GM12878 (cell line): ENCODE measurements at regions of chr5 and their contacts with region 1.

Region 1: GRCh38 chr5:76256116-76256889 is 146.8 kb upstream of the IQGAP2 start:
- DNase-seq: no peak
- ATAC-seq: peak; percentile 98
- H3K4me3 ChIP-seq: no peak overlapping the region
- H3K27ac ChIP-seq: no peak overlapping the region
- H3K4me1 ChIP-seq: peaks cover 3% of the 10 kb centered on the region; the same call in 1 of the 2 replicates
- H3K27me3 ChIP-seq: no peaks in the 10 kb centered on the region
- CTCF ChIP-seq: peak; percentile 83 to 93 (median 85)
- EP300 ChIP-seq: no peak
- POLR2A ChIP-seq: no peak
- RAD21 ChIP-seq: peak; percentile 99

Region 2: DNA sequence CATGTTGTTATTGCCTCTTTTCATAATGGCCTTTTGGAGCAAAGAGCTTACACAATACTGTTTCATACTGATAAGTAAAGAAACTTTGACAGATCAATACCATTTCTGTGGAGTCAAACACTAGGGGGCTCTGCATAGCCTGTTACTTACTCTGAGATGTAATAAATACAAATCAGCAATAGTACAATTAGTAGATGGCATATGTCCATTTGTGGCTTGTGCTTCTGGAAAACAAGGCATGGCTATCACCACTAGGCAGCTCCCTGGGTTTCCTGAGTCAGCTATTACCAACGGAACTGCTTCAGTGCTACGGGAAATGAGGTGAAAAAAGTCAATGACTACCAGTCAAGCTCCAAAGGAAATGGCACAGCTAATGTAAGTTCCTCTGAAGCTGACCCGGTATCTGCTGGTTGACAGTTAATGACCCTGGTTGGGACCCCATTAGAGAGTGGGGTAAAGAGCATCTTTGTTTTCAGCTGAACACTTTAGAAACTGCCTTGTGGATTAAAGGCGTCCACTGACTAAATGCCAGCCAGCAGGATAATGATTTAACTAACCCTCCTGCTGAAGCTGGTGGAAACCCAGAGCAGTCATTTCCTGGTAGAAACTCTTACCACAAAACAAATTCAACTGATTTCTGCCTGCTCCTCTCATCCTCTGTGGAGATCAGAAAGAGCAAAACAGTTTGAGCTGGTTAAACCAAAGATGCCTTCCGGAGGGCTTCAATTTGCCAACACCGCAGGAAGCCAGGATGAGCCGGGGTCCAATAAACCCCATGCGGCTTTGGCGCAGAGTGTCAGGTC is 1321.2 kb before region 1 on chr5:
- CTCF ChIA-PET with region 1: no interaction called
- POLR2A ChIA-PET with region 1: no interaction called
- RAD21 ChIA-PET with region 1: no interaction called
- SMC1A ChIA-PET with region 1: no interaction called
- in situ Hi-C with region 1: no loop called
- intact Hi-C with region 1: loop called (anchors 10 kb)
- DNase-seq: no peak
- ATAC-seq: peak; percentile 64
- H3K4me3 ChIP-seq: no peak overlapping the region
- H3K27ac ChIP-seq: no peak overlapping the region
- H3K4me1 ChIP-seq: no peaks in the 10 kb centered on the region
- H3K27me3 ChIP-seq: peaks cover 0 to 6% of the 10 kb centered on the region in 2 experiments; a peak in 2 of 4 replicates
- CTCF ChIP-seq: peak; percentile 31 to 40 (median 36); a peak in 4 of 6 replicates
- EP300 ChIP-seq: no peak
- POLR2A ChIP-seq: no peak
- RAD21 ChIP-seq: 0 out of 2 replicates have a peak, but pooled peaks have one; percentile 11

Region 3: DNA sequence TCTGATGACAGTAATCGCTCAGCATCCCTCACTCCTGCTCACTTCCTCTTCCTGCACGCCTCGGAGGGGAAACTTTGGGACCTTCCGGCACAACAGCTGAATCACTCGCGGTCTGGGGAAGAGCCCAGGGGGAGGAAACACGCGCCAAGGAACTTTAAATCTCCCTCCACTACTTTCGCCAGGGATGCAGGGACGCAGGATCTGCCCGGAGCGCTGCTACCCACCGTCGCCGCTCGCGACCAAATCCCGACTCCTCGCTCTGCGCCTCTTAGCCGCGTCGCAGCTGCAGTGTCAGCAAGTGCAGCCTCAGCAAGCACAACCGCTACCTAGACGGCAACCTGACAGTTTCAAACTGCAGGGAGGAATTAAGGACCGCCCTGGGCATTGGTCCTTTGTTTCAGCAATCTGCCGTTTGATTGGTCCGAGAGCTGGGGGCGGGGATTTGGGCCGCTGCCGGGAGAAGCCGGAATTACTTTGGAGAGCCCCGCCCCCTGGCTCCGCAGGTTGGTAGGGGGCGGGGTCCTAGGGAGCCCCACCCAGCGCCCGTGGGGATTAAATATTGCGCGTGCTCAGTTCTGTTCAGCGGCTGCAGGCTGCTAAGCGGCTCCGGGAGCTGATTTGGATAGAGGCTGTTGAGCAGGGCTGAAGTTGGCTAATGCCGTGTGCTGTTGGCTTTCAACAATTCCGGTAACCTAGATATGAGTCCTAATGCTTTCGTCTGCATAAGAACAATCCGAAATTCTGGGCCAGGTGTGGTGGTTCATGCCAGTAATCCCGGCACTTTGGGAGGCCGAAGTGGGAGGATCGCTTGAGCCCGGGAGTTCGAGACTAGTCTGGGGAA is 539.0 kb before region 1 on chr5 and contains the start of gene POC5:
- CTCF ChIA-PET with region 1: interaction called, 4 read pairs
- POLR2A ChIA-PET with region 1: no interaction called
- RAD21 ChIA-PET with region 1: no interaction called
- SMC1A ChIA-PET with region 1: no interaction called
- in situ Hi-C with region 1: no loop called
- intact Hi-C with region 1: loop called (anchors 5 kb)
- DNase-seq: peak; percentile 91
- ATAC-seq: peak; percentile 95
- H3K4me3 ChIP-seq: peak within 1 kb of the TSS; percentile 96
- H3K27ac ChIP-seq: peak within 1 kb of the TSS; percentile 98
- H3K4me1 ChIP-seq: no peaks in the 10 kb centered on the region
- H3K27me3 ChIP-seq: no peaks in the 10 kb centered on the region
- CTCF ChIP-seq: no peak
- EP300 ChIP-seq: no peak
- POLR2A ChIP-seq: peak; percentile 100
- RAD21 ChIP-seq: no peak
- polyA plus RNA-seq, gene POC5: 16.6 to 24.7 TPM

Region 4: GRCh38 chr5:75856056-75856455 is 400.2 kb before region 1 on chr5:
- CTCF ChIA-PET with region 1: no interaction called
- POLR2A ChIA-PET with region 1: no interaction called
- RAD21 ChIA-PET with region 1: no interaction called
- SMC1A ChIA-PET with region 1: no interaction called
- in situ Hi-C with region 1: no loop called
- intact Hi-C with region 1: no loop called
- DNase-seq: no peak
- ATAC-seq: no peak
- H3K4me3 ChIP-seq: no peak overlapping the region
- H3K27ac ChIP-seq: no peak overlapping the region
- H3K4me1 ChIP-seq: no peaks in the 10 kb centered on the region
- H3K27me3 ChIP-seq: no peaks in the 10 kb centered on the region
- CTCF ChIP-seq: no peak
- EP300 ChIP-seq: no peak
- POLR2A ChIP-seq: no peak
- RAD21 ChIP-seq: no peak

Region 5: DNA sequence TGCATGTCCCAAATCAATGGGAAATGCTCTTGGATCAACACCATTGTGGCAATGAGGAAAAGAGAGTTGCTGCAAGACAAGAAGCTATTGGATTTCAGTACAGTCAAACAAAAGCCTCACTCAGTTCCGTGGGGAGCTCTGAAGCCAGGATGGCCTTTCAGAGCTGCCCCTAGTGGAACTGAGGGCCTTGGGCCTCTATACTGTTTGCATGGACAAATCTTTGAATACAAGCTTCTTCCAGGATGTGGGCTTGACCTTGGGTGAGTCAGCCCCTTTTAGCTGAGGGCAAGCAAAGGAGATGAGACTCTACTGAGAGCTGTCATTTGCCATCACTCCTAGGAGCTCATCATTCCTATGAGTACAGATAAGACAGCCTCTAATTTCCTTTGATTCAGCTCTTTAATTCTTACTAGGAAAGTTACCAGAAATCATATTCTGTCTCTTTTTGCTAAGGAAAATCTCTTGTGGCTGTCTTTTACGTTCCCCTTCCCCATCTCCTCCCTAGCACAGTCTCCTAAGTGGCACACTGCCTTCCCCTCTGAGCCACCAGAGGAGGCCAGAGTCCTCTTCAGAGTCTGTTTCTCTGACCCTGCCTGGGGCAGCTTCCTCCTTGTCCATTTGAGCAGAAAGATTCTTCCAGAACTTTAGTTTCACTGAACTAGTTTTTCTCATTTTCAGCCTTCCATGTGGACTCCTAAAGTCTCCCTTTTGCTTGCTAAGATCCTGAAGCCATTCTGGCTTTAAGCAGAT is 370.3 kb before region 1 on chr5:
- CTCF ChIA-PET with region 1: interaction called, 14 read pairs
- POLR2A ChIA-PET with region 1: no interaction called
- RAD21 ChIA-PET with region 1: interaction called, 7 read pairs
- SMC1A ChIA-PET with region 1: interaction called, 4 read pairs
- in situ Hi-C with region 1: no loop called
- intact Hi-C with region 1: loop called (anchors 2 kb)
- DNase-seq: no peak
- ATAC-seq: peak; percentile 73
- H3K4me3 ChIP-seq: no peak overlapping the region
- H3K27ac ChIP-seq: no peak overlapping the region
- H3K4me1 ChIP-seq: no peaks in the 10 kb centered on the region
- H3K27me3 ChIP-seq: no peaks in the 10 kb centered on the region
- CTCF ChIP-seq: peak; percentile 48 to 66 (median 62)
- EP300 ChIP-seq: no peak
- POLR2A ChIP-seq: no peak
- RAD21 ChIP-seq: peak; percentile 83

Region 6: DNA sequence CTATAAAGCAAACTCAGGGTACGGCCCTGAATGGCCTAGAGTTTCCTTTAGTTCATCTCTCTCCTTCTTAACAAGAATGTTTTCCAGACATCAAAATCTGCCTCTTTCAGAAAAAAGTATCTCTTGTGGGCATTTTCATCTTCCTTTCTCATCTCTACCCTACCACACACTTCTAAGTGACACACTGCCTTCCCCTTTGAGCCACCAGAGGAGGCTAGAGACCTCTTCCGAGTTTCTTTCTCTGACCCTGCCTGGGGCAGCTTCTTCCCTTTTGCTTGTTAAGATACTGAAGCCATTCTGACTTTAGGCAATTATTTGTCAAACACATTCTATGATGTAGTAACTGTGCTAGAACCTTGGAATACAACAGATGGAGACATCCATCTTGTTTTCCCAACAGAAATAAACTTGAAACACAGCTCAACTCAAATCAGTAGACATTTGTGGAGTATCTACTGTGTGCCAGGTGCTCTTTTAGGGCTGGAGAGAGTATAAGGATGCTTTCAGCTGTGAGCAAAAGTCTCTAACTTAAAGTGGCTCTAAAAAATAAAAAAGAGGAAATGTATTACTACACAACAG is 181.7 kb before region 1 on chr5:
- CTCF ChIA-PET with region 1: interaction called, 8 read pairs
- POLR2A ChIA-PET with region 1: no interaction called
- RAD21 ChIA-PET with region 1: interaction called, 6 read pairs
- SMC1A ChIA-PET with region 1: interaction called, 8 read pairs
- in situ Hi-C with region 1: loop called (anchors 5 kb)
- intact Hi-C with region 1: loop called (anchors 1 kb)
- DNase-seq: no peak
- ATAC-seq: peak; percentile 86
- H3K4me3 ChIP-seq: no peak overlapping the region
- H3K27ac ChIP-seq: no peak overlapping the region
- H3K4me1 ChIP-seq: no peaks in the 10 kb centered on the region
- H3K27me3 ChIP-seq: peaks cover 0 to 4% of the 10 kb centered on the region in 2 experiments; a peak in 1 of 4 replicates
- CTCF ChIP-seq: peak; percentile 69 to 88 (median 77)
- EP300 ChIP-seq: no peak
- POLR2A ChIP-seq: no peak
- RAD21 ChIP-seq: peak; percentile 96

Region 7: GRCh38 chr5:76175051-76175666 is 81.1 kb before region 1 on chr5:
- CTCF ChIA-PET with region 1: interaction called, 13 read pairs
- POLR2A ChIA-PET with region 1: no interaction called
- RAD21 ChIA-PET with region 1: interaction called, 11 read pairs
- SMC1A ChIA-PET with region 1: interaction called, 4 read pairs
- in situ Hi-C with region 1: no loop called
- intact Hi-C with region 1: loop called (anchors 2 kb)
- DNase-seq: peak; percentile 32
- ATAC-seq: peak; percentile 82
- H3K4me3 ChIP-seq: peak overlapping the region; percentile 45; the same call in 1 of the 2 replicates
- H3K27ac ChIP-seq: peak overlapping the region; percentile 57
- H3K4me1 ChIP-seq: peaks cover 25% of the 10 kb centered on the region
- H3K27me3 ChIP-seq: no peaks in the 10 kb centered on the region
- CTCF ChIP-seq: peak; percentile 83 to 89 (median 84)
- EP300 ChIP-seq: no peak
- POLR2A ChIP-seq: no peak
- RAD21 ChIP-seq: peak; percentile 94

Region 8: DNA sequence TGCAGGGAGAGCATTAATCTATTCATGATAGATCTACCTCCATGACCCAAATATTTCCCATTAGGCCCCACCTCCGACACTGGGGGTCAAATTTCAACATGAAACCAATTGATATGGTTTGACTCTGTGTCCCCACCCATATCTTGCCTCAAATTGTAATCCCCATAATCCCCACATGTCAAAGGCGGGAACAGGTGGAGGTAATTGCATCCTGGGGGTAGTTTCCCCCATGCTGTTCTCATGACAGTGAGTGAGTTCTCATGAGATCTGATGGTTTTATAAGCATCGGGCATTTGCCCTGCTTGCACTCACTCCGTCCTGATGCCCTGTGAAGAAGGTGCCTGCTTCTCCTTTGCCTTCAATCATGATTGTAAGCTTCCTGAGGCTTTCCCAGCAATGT is 19.6 kb before region 1 on chr5:
- CTCF ChIA-PET with region 1: no interaction called
- POLR2A ChIA-PET with region 1: no interaction called
- RAD21 ChIA-PET with region 1: no interaction called
- SMC1A ChIA-PET with region 1: no interaction called
- in situ Hi-C with region 1: no loop called
- intact Hi-C with region 1: no loop called
- DNase-seq: no peak
- ATAC-seq: no peak
- H3K4me3 ChIP-seq: no peak overlapping the region
- H3K27ac ChIP-seq: no peak overlapping the region
- H3K4me1 ChIP-seq: no peaks in the 10 kb centered on the region
- H3K27me3 ChIP-seq: no peaks in the 10 kb centered on the region; a peak in 1 of 4 replicates
- CTCF ChIP-seq: no peak
- EP300 ChIP-seq: no peak
- POLR2A ChIP-seq: no peak
- RAD21 ChIP-seq: no peak

Region 9: DNA sequence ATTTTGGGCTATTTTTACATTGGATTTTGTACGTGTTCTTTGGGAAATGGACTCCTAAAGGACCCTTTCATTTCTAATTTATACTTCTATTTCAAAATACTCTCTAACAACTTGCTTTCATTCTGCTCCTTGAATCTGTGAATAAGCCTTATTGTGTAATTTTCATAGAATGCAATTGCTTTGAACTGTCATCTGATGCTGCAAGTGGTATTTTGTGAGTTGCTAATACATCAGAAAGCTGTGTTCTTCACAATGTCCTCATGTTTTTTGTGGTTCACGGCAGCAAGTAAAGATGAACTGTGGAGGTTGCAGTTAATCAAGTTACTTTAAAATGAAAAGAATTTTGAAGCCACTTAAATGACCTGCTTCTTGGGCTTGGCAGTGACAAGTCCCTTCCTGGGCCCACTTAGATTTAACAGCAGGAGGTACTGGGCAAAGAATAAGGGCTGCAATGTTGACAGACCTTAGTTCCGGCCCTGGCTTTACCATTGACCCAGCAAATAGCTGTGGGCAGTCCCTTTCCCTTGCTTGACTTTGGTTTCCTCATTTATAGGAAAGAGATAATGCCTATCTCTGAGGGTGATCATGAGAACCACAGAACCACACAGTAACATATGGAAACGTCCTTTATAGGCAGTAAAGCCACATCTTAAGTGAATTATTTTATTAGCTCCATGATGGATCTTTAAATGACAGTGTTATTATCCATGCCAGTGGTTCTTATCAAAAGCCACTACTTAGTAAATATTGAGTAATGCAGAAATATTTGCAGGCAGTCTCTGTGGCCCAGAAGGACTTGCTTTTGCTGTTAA is 201.6 kb after region 1 on chr5:
- CTCF ChIA-PET with region 1: no interaction called
- POLR2A ChIA-PET with region 1: no interaction called
- RAD21 ChIA-PET with region 1: no interaction called
- SMC1A ChIA-PET with region 1: no interaction called
- in situ Hi-C with region 1: no loop called
- intact Hi-C with region 1: no loop called
- DNase-seq: no peak
- ATAC-seq: no peak
- H3K4me3 ChIP-seq: no peak overlapping the region
- H3K27ac ChIP-seq: no peak overlapping the region
- H3K4me1 ChIP-seq: no peaks in the 10 kb centered on the region
- H3K27me3 ChIP-seq: no peaks in the 10 kb centered on the region
- CTCF ChIP-seq: no peak
- EP300 ChIP-seq: no peak
- POLR2A ChIP-seq: no peak
- RAD21 ChIP-seq: no peak

Region 10: GRCh38 chr5:76544268-76544926 is 288.1 kb after region 1 on chr5:
- CTCF ChIA-PET with region 1: interaction called, 3 read pairs
- POLR2A ChIA-PET with region 1: no interaction called
- RAD21 ChIA-PET with region 1: interaction called, 4 read pairs
- SMC1A ChIA-PET with region 1: interaction called, 3 read pairs
- in situ Hi-C with region 1: no loop called
- intact Hi-C with region 1: loop called (anchors 1 kb)
- DNase-seq: peak; percentile 25
- ATAC-seq: peak; percentile 55
- H3K4me3 ChIP-seq: no peak overlapping the region
- H3K27ac ChIP-seq: peak overlapping the region; percentile 35; the same call in 1 of the 2 replicates
- H3K4me1 ChIP-seq: peaks cover 37% of the 10 kb centered on the region
- H3K27me3 ChIP-seq: no peaks in the 10 kb centered on the region
- CTCF ChIP-seq: peak; percentile 64 to 81 (median 68); a peak in 5 of 6 replicates
- EP300 ChIP-seq: no peak
- POLR2A ChIP-seq: no peak
- RAD21 ChIP-seq: peak; percentile 77